Naive thymus-derived CD8-positive, alpha-beta T cell (primary cell): ENCODE measurements at regions of chr12 and their contacts with region 1.

Region 1: GRCh38 chr12:56359851-56360767 is at the start of gene STAT2:
- DNase-seq: peak; percentile 95 to 100 (median 99)
- ATAC-seq: peak; percentile 95 to 96
- H3K4me3 Mint-ChIP-seq: peak within 1 kb of the TSS; percentile 93 to 99 (median 96)
- H3K27ac Mint-ChIP-seq: peak within 1 kb of the TSS; percentile 93 to 99 (median 96)
- H3K4me1 Mint-ChIP-seq: peaks cover 8 to 38% (median 36%) of the 10 kb centered on the region in 4 donors
- H3K27me3 Mint-ChIP-seq: peaks cover 0 to 1% (median 0%) of the 10 kb centered on the region in 5 donors
- polyA plus RNA-seq, gene STAT2: 61.7 to 68.1 (median 64.5) TPM

Region 2: DNA sequence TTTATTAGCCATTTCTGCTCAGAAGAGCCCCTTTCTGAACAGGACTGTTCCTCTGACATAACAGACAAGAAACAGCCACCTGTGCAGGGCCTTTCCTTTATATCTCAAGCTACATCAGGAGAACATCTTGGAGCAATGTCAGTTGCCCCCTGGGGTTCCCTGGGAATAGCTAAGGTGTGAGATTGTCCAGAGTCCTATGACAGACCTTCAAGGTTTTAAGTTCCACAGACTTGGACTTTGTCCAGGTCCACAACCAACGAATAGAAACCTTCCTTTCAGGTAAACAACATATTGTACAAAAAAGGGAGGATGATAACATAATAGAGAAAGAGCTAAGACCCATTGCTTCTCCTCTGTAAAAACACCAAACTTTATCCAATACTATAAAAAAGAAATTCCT is 18.5 kb before region 1 on chr12:
- POLR2A ChIA-PET with region 1: interaction called, 182 read pairs
- DNase-seq: no peak
- ATAC-seq: no peak
- H3K4me3 Mint-ChIP-seq: no peak overlapping the region
- H3K27ac Mint-ChIP-seq: peak overlapping the region; percentile 65 to 87 (median 78)
- H3K4me1 Mint-ChIP-seq: peaks cover 18 to 45% (median 35%) of the 10 kb centered on the region in 4 donors
- H3K27me3 Mint-ChIP-seq: no peaks in the 10 kb centered on the region

Region 3: DNA sequence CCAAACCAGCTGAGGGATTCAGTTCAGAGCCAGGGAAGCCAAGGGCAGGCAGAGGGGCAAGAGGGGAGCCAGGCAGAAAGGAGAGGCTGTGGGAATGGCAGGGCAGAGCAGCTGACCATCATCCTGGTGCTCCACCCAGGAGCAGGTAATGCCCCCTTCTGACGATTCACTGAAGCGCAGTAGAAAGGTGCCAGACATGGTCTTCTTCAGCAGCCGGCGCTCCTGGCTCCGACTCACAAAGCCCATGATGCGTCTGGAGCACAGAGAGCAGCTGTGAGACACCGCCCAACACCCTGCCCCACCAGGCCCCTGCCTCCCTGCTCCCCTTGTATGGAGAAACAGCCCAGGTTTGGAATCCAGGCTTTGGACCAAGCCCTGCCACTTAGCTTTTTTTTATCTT is 13.4 kb before region 1 on chr12:
- POLR2A ChIA-PET with region 1: interaction called, 44 read pairs
- DNase-seq: no peak
- ATAC-seq: no peak
- H3K4me3 Mint-ChIP-seq: no peak overlapping the region
- H3K27ac Mint-ChIP-seq: peak overlapping the region in 3 of 10 donors; percentile 19 to 85 (median 71)
- H3K4me1 Mint-ChIP-seq: peaks cover 0 to 2% (median under 1%) of the 10 kb centered on the region in 4 donors
- H3K27me3 Mint-ChIP-seq: no peaks in the 10 kb centered on the region

Region 4: GRCh38 chr12:56411781-56412639 is 51.9 kb after region 1 on chr12:
- POLR2A ChIA-PET with region 1: no interaction called
- DNase-seq: no peak
- ATAC-seq: no peak
- H3K4me3 Mint-ChIP-seq: no peak overlapping the region
- H3K27ac Mint-ChIP-seq: no peak overlapping the region
- H3K4me1 Mint-ChIP-seq: no peaks in the 10 kb centered on the region
- H3K27me3 Mint-ChIP-seq: no peaks in the 10 kb centered on the region

Region 5: GRCh38 chr12:56510786-56511185 is 150.7 kb after region 1 on chr12:
- POLR2A ChIA-PET with region 1: no interaction called
- DNase-seq: no peak
- ATAC-seq: no peak
- H3K4me3 Mint-ChIP-seq: no peak overlapping the region
- H3K27ac Mint-ChIP-seq: no peak overlapping the region
- H3K4me1 Mint-ChIP-seq: peaks cover 2 to 7% (median 4%) of the 10 kb centered on the region in 4 donors
- H3K27me3 Mint-ChIP-seq: peaks cover 0 to 12% (median 4%) of the 10 kb centered on the region in 5 donors